PC-9 (cell line): ENCODE measurements at regions of chr2 and their contacts with region 1.

Region 1: DNA sequence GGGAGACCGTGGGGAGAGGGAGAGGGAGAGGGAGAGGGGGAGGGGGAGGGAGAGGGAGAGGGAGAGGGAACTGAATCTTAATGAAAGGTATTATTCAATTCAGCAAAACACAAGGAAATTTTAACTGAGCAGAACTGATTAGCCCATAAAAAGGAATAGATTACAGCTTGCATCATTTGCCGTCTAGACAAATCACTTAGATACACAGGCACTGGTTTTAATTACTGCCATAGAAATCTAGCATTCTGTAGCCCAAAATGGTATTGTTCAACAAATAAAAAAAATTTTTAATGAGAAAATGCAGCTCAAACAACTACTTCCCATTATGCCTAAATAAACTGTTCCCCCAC is 7.9 kb upstream of the KCNF1 start:
- DNase-seq: peak in 1 of 2 experiments; percentile 4
- H3K4me3 ChIP-seq: no peak overlapping the region
- H3K27ac ChIP-seq: no peak overlapping the region
- H3K4me1 ChIP-seq: peaks cover 22% of the 10 kb centered on the region
- H3K27me3 ChIP-seq: no peaks in the 10 kb centered on the region
- CTCF ChIP-seq: no peak

Region 2: GRCh38 chr2:10838734-10839133 is 65.1 kb before region 1 on chr2:
- CTCF ChIA-PET with region 1: interaction called, 14 read pairs
- POLR2A ChIA-PET with region 1: no interaction called
- intact Hi-C with region 1: no loop called
- DNase-seq: no peak
- H3K4me3 ChIP-seq: no peak overlapping the region
- H3K27ac ChIP-seq: no peak overlapping the region
- H3K4me1 ChIP-seq: peaks cover 2% of the 10 kb centered on the region; the same call in 1 of the 2 replicates
- H3K27me3 ChIP-seq: no peaks in the 10 kb centered on the region
- CTCF ChIP-seq: no peak

Region 3: DNA sequence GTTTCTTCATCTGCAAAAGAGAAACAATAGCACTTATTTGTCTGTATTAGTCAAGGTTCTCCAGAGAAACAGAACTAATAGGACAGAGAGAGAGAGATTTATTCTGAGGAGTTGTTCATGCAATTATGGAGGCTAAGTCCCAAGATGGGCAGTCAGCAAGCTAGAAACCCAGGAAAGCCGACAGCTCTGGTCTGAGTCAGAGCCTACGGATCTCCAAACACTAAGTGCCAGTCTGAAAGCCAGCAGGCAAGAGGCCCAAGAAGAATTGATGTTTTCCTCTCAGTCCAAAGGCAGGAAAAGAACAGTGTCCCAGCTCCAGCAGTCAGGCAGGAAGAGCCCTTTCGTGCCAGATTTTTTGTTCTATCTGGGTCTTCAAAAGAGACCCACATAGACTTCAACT is 214.9 kb after region 1 on chr2:
- CTCF ChIA-PET with region 1: no interaction called
- POLR2A ChIA-PET with region 1: no interaction called
- intact Hi-C with region 1: no loop called
- DNase-seq: no peak
- H3K4me3 ChIP-seq: no peak overlapping the region
- H3K27ac ChIP-seq: no peak overlapping the region
- H3K4me1 ChIP-seq: peaks cover 28% of the 10 kb centered on the region
- H3K27me3 ChIP-seq: no peaks in the 10 kb centered on the region
- CTCF ChIP-seq: no peak